Activated CD8-positive, alpha-beta T cell treated with anti-CD3 and anti-CD28 coated beads for 36 hours (primary cell): ENCODE measurements at regions of chr2 and their contacts with region 1.

Region 1: GRCh38 chr2:176110975-176111663 is 4.0 kb downstream of the HOXD11 start:
- DNase-seq: peak; percentile 54
- ATAC-seq: no peak
- H3K4me3 Mint-ChIP-seq: no peak overlapping the region
- H3K27ac Mint-ChIP-seq: no peak overlapping the region
- H3K4me1 Mint-ChIP-seq: peaks cover 15% of the 10 kb centered on the region
- H3K27me3 Mint-ChIP-seq: peaks cover 81% of the 10 kb centered on the region
- CTCF ChIP-seq: peak; percentile 45

Region 2: GRCh38 chr2:175937216-175937615 is 173.9 kb before region 1 on chr2:
- CTCF ChIA-PET with region 1: no interaction called
- POLR2A ChIA-PET with region 1: no interaction called
- intact Hi-C with region 1: no loop called
- DNase-seq: no peak
- ATAC-seq: no peak
- H3K4me3 Mint-ChIP-seq: no peak overlapping the region
- H3K27ac Mint-ChIP-seq: no peak overlapping the region
- H3K4me1 Mint-ChIP-seq: no peaks in the 10 kb centered on the region
- H3K27me3 Mint-ChIP-seq: no peaks in the 10 kb centered on the region
- CTCF ChIP-seq: no peak

Region 3: GRCh38 chr2:176075481-176075880 is 35.6 kb before region 1 on chr2:
- CTCF ChIA-PET with region 1: interaction called, 10 read pairs
- POLR2A ChIA-PET with region 1: no interaction called
- intact Hi-C with region 1: no loop called
- DNase-seq: no peak
- ATAC-seq: no peak
- H3K4me3 Mint-ChIP-seq: no peak overlapping the region
- H3K27ac Mint-ChIP-seq: no peak overlapping the region
- H3K4me1 Mint-ChIP-seq: peaks cover 5% of the 10 kb centered on the region
- H3K27me3 Mint-ChIP-seq: peaks cover 77% of the 10 kb centered on the region
- CTCF ChIP-seq: no peak

Region 4: DNA sequence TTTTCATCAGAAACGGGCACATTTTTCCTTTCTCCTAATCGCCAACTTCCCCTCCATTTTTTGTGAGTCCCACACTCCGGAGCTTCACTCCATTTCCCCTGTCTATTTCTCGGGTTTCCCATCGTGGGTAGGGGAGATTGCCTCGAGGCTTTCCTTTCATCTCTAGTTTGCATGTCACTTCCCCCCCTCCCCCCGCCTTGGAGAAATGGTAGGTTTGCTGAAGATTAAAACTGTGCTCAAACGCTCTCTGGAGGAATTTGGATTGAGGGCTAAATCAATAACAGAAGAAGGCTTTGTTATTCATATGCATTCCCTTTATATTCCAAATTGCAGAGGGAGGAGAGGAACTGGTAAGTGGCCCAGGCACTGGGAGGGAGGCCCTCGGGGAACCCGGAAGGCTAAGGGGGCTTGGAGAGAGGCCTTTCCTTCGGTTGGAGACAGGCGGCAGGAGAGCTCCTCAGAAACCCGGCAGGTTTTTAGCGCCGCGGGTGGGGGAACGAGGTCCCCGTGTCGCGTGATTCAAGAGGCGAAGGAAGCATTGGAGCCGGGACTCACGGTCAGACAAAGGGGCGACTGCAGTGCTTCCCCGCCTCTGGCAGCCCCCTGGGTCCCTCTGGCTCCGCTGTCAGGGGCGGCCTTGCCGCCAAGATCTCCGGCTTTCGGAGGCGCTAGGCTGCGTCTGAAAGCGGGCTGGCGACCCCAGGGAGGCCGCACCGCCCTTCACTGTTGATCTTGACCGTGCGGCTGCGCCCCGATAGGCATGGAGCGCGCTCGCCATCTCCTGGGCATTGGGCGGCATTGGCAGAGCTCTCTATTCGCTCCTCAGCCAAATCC is 13.9 kb before region 1 on chr2:
- CTCF ChIA-PET with region 1: interaction called, 28 read pairs
- POLR2A ChIA-PET with region 1: no interaction called
- intact Hi-C with region 1: no loop called
- DNase-seq: peak; percentile 74
- ATAC-seq: peak; percentile 84
- H3K4me3 Mint-ChIP-seq: peak overlapping the region; percentile 35
- H3K27ac Mint-ChIP-seq: no peak overlapping the region
- H3K4me1 Mint-ChIP-seq: peaks cover 14% of the 10 kb centered on the region
- H3K27me3 Mint-ChIP-seq: peaks cover 82% of the 10 kb centered on the region
- CTCF ChIP-seq: peak; percentile 85